Activated CD4-positive, alpha-beta T cell treated with anti-CD3 and anti-CD28 coated beads, Interleukin-2, amount 10 ng/mL, durations not matched to agents 24 days and 14 days (primary cell): ENCODE measurements at regions of chr9 and their contacts with region 1.

Region 1: DNA sequence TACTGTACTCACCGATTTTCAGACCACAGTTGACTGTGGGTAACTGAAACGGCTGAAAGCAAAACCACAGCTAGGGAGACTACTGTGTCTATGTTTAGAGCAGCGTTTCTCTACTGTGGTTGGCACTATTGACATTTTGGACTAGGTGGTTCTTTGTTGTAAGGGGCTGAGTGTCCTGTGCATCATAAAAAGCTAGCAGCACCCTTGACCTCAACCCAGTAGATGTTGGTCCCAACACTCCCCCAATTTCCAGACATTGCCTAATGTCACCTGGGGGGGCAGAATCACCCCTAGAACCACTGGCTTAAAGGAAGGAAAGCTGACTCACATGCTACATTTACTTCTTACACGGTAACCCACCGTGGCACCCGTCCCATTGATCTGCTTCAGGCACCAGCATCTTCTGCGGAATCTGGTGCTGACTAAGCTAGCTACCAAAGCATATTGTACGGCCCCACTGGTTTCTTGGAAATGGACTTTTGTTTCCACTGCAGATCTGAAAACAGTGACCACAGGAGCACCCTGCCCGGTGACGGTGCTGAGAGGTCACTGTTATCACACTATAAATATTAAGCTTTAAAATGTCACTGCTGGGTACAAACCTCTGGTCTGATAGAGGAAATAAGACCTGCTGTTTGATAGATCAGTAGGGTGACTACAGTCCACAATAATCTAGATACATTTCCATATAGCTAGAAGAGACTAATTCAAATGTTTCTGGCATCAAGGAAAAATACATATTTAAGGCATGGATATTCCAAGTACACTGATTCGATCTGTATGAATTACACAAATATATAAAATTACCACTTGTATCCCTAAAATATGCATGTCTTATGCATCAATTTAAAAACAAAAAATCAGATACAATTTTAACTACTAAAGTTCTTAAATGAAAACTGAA is 151.4 kb downstream of the HSD17B3 start:
- DNase-seq: peak; percentile 83
- H3K4me3 Mint-ChIP-seq: peak overlapping the region; percentile 58
- H3K27ac Mint-ChIP-seq: peak overlapping the region; percentile 68
- H3K4me1 Mint-ChIP-seq: peaks cover 32% of the 10 kb centered on the region
- H3K27me3 Mint-ChIP-seq: peaks cover 21% of the 10 kb centered on the region

Region 2: GRCh38 chr9:96020792-96021550 is 129.6 kb before region 1 on chr9:
- intact Hi-C with region 1: loop called (anchors 2 kb)
- DNase-seq: peak; percentile 91
- H3K4me3 Mint-ChIP-seq: peak overlapping the region; percentile 84
- H3K27ac Mint-ChIP-seq: peak overlapping the region; percentile 96
- H3K4me1 Mint-ChIP-seq: peaks cover 72% of the 10 kb centered on the region
- H3K27me3 Mint-ChIP-seq: peaks cover 12% of the 10 kb centered on the region

Region 3: DNA sequence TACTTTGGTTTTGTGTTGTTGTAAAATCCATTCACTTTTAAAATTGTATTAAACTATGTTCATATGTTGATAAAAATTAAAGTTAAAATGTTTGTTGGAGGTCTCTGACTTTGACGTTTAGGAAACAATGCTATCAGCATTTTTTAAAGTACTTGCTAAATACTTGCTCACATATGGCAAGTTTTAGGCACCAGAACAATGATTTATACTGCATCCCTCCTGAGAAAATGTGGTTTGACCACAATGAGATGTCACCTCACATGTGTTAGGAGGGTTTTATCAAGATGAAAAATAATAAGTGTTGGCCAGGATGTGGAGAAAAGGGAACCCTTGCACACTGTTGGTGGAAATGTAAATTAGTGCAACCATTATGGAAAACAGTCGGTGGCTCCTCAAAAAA is 29.4 kb before region 1 on chr9:
- intact Hi-C with region 1: loop called (anchors 2 kb)
- DNase-seq: no peak
- H3K4me3 Mint-ChIP-seq: no peak overlapping the region
- H3K27ac Mint-ChIP-seq: no peak overlapping the region
- H3K4me1 Mint-ChIP-seq: peaks cover 22% of the 10 kb centered on the region
- H3K27me3 Mint-ChIP-seq: peaks cover 9% of the 10 kb centered on the region

Region 4: DNA sequence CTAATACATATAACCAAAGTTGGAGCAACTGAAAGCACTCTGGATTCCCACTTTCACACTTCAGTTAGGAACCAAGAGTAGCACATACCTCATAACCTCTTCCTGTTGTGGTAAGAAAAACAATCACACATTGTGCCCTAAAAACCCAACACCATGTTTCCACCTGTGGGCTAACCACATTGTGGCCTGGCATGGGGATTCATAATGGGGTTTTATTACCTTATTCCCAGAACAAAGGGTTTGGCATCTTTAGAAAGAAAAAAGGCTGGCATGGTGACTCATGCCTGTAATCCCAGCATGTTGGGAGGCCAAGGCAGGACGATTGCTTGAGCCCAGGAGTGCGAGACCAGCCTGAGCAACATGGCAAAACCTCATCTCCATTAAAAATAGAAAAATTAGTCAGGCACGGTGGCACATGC is 90.8 kb after region 1 on chr9:
- intact Hi-C with region 1: loop called (anchors 2 kb)
- DNase-seq: peak; percentile 82
- H3K4me3 Mint-ChIP-seq: no peak overlapping the region
- H3K27ac Mint-ChIP-seq: peak overlapping the region; percentile 70
- H3K4me1 Mint-ChIP-seq: peaks cover 14% of the 10 kb centered on the region
- H3K27me3 Mint-ChIP-seq: peaks cover 61% of the 10 kb centered on the region